ENCODE measurements at regions of chr12 and their contacts with region 1.

Region 1: GRCh38 chr12:75750716-75751306 is 239.4 kb upstream of the KRR1 start:
- DNase-seq: no peak
- H3K4me3 Mint-ChIP-seq: no peak overlapping the region
- H3K27ac Mint-ChIP-seq: no peak overlapping the region
- H3K4me1 Mint-ChIP-seq: peaks cover 10% of the 10 kb centered on the region
- H3K27me3 Mint-ChIP-seq: peaks cover 5% of the 10 kb centered on the region

Region 2: GRCh38 chr12:75790219-75790618 is 39.4 kb after region 1 on chr12:
- intact Hi-C with region 1: loop called (anchors 5 kb)
- DNase-seq: no peak
- H3K4me3 Mint-ChIP-seq: no peak overlapping the region
- H3K27ac Mint-ChIP-seq: no peak overlapping the region
- H3K4me1 Mint-ChIP-seq: peaks cover 3% of the 10 kb centered on the region
- H3K27me3 Mint-ChIP-seq: peaks cover 16% of the 10 kb centered on the region

Measured in activated CD4-positive, alpha-beta T cell treated with anti-CD3 and anti-CD28 coated beads, Interleukin-2, amount 10 ng/mL, durations not matched to agents 24 days and 14 days (primary cell).